ENCODE measurements at regions of chr12 and their contacts with region 1.

Region 1: DNA sequence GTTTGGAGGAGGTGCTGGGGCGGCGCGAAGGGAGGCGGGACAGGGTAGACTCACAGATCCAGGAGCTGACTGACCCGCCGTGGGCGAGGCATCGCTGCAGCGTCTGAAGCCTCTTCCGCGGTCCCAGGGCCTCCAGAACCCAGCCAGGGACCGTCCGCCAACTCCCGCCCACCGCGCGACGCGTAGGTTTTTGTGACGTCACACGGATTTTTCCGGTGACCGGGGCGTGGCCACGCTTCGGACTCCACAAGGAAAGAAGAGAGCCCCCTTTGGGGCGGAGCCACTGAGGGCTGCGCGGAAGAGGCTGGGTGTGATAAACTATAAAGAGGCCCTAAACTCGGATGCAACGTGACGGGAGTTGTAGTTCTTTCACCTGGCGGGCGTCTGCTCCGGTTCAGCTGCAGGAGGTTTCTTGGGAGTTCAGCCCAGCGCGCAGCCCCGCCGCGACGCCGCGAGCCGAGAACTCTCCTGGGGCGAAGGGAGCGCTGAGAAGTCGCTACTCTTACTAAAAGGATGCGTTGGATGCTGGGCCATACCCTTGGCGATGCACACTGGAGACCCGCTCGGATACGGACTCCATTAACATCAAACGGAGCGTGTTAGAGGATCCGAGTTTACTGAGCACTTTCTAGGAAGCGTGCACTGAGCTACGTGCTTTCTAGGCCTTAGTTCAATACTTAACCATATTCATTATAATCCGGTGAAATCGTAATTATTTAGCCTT is at the start of gene AMN1:
- DNase-seq: peak; percentile 98 to 100 (median 99)
- H3K4me3 ChIP-seq: peak within 1 kb of the TSS; percentile 88 to 99
- H3K4me3 Mint-ChIP-seq: peak within 1 kb of the TSS; percentile 98 to 100 (median 99)
- H3K27ac ChIP-seq: peak within 1 kb of the TSS; percentile 81
- H3K27ac Mint-ChIP-seq: peak within 1 kb of the TSS; percentile 97 to 100 (median 99)
- H3K4me1 ChIP-seq: peaks cover 54% of the 10 kb centered on the region
- H3K4me1 Mint-ChIP-seq: peaks cover 39 to 76% (median 55%) of the 10 kb centered on the region in 4 donors
- H3K27me3 ChIP-seq: no peaks in the 10 kb centered on the region
- H3K27me3 Mint-ChIP-seq: no peaks in the 10 kb centered on the region
- total RNA-seq, gene AMN1: 15.3 to 18.4 TPM

Region 2: DNA sequence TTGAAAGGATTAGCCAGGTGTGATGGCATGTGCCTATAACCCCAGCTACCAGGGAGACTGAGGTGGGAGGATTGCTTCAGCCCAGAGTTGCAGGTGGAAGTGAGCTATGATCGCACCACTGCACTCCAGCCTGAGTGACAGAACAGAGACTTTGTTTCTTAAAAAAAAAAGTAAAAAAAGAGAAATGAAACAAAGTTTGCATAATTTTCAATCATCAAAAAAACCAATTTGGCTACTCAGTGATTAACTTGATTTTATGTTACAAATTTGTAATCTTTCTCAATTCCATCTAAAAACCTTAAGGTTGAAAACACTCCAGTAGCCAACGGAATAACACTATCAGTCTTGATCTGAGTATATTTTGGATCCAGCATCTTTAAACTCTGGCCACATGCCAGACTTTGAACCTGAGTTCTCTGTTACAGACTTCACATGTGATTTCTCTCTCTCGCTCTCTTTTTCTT is 125.5 kb before region 1 on chr12:
- CTCF ChIA-PET with region 1: no interaction called
- POLR2A ChIA-PET with region 1: no interaction called
- intact Hi-C with region 1: no loop called
- DNase-seq: no peak
- H3K4me3 ChIP-seq: no peak overlapping the region
- H3K4me3 Mint-ChIP-seq: no peak overlapping the region
- H3K27ac ChIP-seq: no peak overlapping the region
- H3K27ac Mint-ChIP-seq: no peak overlapping the region
- H3K4me1 ChIP-seq: no peaks in the 10 kb centered on the region
- H3K4me1 Mint-ChIP-seq: no peaks in the 10 kb centered on the region
- H3K27me3 ChIP-seq: no peaks in the 10 kb centered on the region
- H3K27me3 Mint-ChIP-seq: peaks cover 0 to 9% of the 10 kb centered on the region in 2 donors

Region 3: GRCh38 chr12:31659087-31659933 is 69.8 kb before region 1 on chr12 and contains the start of gene ETFBKMT:
- CTCF ChIA-PET with region 1: no interaction called
- POLR2A ChIA-PET with region 1: interaction called, 18 read pairs
- intact Hi-C with region 1: loop called (anchors 1 kb)
- DNase-seq: peak; percentile 91 to 97 (median 94)
- H3K4me3 ChIP-seq: peak within 1 kb of the TSS; percentile 86 to 89
- H3K4me3 Mint-ChIP-seq: peak within 1 kb of the TSS; percentile 92 to 99 (median 94)
- H3K27ac ChIP-seq: peak within 1 kb of the TSS; percentile 86
- H3K27ac Mint-ChIP-seq: peak within 1 kb of the TSS; percentile 91 to 99 (median 98)
- H3K4me1 ChIP-seq: peaks cover 17% of the 10 kb centered on the region
- H3K4me1 Mint-ChIP-seq: peaks cover 8 to 21% (median 14%) of the 10 kb centered on the region in 4 donors
- H3K27me3 ChIP-seq: no peaks in the 10 kb centered on the region
- H3K27me3 Mint-ChIP-seq: no peaks in the 10 kb centered on the region
- total RNA-seq, gene ETFBKMT: 1.5 to 1.8 TPM

Region 4: DNA sequence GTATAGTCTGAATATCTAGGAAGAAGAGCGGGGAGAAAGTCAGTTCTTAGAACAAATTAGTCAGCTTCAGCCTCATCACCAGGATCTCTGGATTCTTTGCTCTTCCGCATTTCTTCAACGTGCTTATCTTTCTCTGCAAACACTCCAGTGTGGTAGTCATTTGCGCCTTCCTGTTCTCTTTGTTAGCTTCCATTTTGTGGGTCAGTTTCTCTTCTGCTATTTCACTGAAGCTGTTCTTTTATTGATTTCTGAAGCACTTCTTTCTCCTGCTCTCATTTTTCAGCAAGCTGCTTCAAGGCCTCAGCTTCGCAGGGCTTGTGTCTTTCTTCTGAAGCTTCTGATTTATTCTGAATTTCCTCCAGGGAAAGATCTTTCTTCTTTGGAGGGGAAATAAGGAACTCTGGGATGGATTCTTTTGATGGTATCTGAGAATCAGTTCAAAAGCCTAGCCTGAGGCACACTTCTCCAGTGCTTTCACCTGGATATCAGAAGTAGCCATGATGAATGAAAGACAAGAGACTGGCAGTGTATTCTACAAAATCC is 13.7 kb before region 1 on chr12:
- CTCF ChIA-PET with region 1: interaction called, 4 read pairs
- POLR2A ChIA-PET with region 1: interaction called, 17 read pairs
- intact Hi-C with region 1: no loop called
- DNase-seq: no peak
- H3K4me3 ChIP-seq: no peak overlapping the region
- H3K4me3 Mint-ChIP-seq: no peak overlapping the region
- H3K27ac ChIP-seq: no peak overlapping the region
- H3K27ac Mint-ChIP-seq: peak overlapping the region in 2 of 7 donors; percentile 22 to 57
- H3K4me1 ChIP-seq: no peaks in the 10 kb centered on the region
- H3K4me1 Mint-ChIP-seq: peaks cover 0 to 17% (median 8%) of the 10 kb centered on the region in 4 donors
- H3K27me3 ChIP-seq: no peaks in the 10 kb centered on the region
- H3K27me3 Mint-ChIP-seq: no peaks in the 10 kb centered on the region

Region 5: GRCh38 chr12:31749024-31749704 is 20.1 kb after region 1 on chr12:
- CTCF ChIA-PET with region 1: interaction called, 3 read pairs
- POLR2A ChIA-PET with region 1: interaction called, 15 read pairs
- intact Hi-C with region 1: loop called (anchors 1 kb)
- DNase-seq: peak in 4 of 5 donors; percentile 18 to 81 (median 33)
- H3K4me3 ChIP-seq: no peak overlapping the region
- H3K4me3 Mint-ChIP-seq: peak overlapping the region; percentile 39 to 81 (median 76)
- H3K27ac ChIP-seq: no peak overlapping the region
- H3K27ac Mint-ChIP-seq: peak overlapping the region in 6 of 7 donors; percentile 4 to 90 (median 85)
- H3K4me1 ChIP-seq: peaks cover 33% of the 10 kb centered on the region
- H3K4me1 Mint-ChIP-seq: peaks cover 32 to 60% (median 48%) of the 10 kb centered on the region in 4 donors
- H3K27me3 ChIP-seq: no peaks in the 10 kb centered on the region
- H3K27me3 Mint-ChIP-seq: no peaks in the 10 kb centered on the region

Region 6: DNA sequence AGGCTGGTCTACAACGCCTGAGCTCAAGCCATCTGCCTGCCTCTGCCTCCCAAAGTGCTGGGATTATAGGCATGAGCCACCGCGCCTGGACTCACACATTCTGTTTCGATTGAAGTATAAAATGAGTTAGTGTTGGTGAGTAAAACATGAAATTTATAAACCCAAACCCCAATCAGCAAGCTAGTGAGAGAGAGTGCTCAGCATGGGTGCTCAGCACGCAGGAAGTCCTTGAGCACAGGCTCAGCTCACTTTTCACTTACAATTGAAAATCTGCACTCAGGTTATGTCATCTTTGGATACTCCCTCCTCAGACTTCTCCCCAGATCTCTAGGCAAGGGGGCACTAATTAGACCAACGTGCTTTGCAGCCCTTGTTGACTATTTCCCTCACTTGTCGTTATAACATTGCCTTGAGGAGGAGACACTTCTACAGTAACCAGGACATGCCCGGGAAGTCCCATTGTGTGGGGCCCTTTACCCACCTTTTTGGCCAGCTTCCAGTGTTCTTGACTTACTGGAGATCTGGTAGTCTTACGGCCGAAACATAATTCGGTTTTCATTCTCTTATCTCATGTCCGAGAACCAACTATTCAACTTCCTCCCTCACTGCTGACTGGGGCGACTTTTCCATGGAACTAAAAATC is 68.3 kb after region 1 on chr12:
- CTCF ChIA-PET with region 1: no interaction called
- POLR2A ChIA-PET with region 1: interaction called, 4 read pairs
- intact Hi-C with region 1: loop called (anchors 5 kb)
- DNase-seq: no peak
- H3K4me3 ChIP-seq: no peak overlapping the region
- H3K4me3 Mint-ChIP-seq: peak overlapping the region; percentile 15 to 83 (median 58)
- H3K27ac ChIP-seq: no peak overlapping the region
- H3K27ac Mint-ChIP-seq: peak overlapping the region; percentile 63 to 89 (median 65)
- H3K4me1 ChIP-seq: peaks cover 18% of the 10 kb centered on the region
- H3K4me1 Mint-ChIP-seq: peaks cover 28 to 43% (median 32%) of the 10 kb centered on the region in 4 donors
- H3K27me3 ChIP-seq: no peaks in the 10 kb centered on the region
- H3K27me3 Mint-ChIP-seq: no peaks in the 10 kb centered on the region

Region 7: DNA sequence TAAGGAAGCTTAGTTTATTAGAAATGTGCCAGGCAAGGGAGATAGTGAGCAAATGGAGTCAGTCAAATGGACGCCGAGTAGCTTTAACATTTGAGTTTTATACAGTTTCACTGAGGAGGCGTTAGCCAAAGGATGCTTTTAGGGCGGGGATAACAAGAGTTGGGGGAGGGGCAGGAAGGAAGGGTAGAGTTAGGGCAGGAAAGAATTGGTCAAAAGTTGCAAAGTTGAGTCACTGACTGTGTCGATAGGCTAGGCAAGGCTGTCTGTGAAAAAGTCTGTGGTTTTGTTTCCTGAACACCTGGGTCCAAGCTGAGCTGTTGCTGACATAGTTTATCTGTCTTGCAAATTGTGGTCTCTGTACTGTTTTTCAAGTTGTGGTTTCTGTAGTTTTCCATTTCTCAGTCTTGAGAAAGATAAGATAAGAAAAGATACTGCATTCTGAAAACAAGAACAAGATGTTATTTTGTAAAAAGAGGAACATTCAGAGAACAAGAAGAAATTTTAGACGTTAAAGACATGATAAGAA is 167.5 kb after region 1 on chr12:
- CTCF ChIA-PET with region 1: interaction called, 11 read pairs
- POLR2A ChIA-PET with region 1: interaction called, 57 read pairs
- intact Hi-C with region 1: loop called (anchors 1 kb)
- DNase-seq: peak; percentile 88 to 95 (median 94)
- H3K4me3 ChIP-seq: peak overlapping the region; percentile 9 to 22
- H3K4me3 Mint-ChIP-seq: peak overlapping the region; percentile 63 to 88 (median 74)
- H3K27ac ChIP-seq: peak overlapping the region; percentile 55
- H3K27ac Mint-ChIP-seq: peak overlapping the region; percentile 91 to 99 (median 97)
- H3K4me1 ChIP-seq: peaks cover 75% of the 10 kb centered on the region
- H3K4me1 Mint-ChIP-seq: peaks cover 34 to 78% (median 49%) of the 10 kb centered on the region in 4 donors
- H3K27me3 ChIP-seq: no peaks in the 10 kb centered on the region
- H3K27me3 Mint-ChIP-seq: no peaks in the 10 kb centered on the region

Region 8: GRCh38 chr12:31966558-31967205 is 237.6 kb after region 1 on chr12:
- CTCF ChIA-PET with region 1: no interaction called
- POLR2A ChIA-PET with region 1: interaction called, 97 read pairs
- intact Hi-C with region 1: no loop called
- DNase-seq: no peak
- H3K4me3 ChIP-seq: peak overlapping the region; percentile 34 to 39
- H3K4me3 Mint-ChIP-seq: peak overlapping the region; percentile 93 to 98 (median 96)
- H3K27ac ChIP-seq: peak overlapping the region; percentile 35
- H3K27ac Mint-ChIP-seq: peak overlapping the region; percentile 85 to 95 (median 94)
- H3K4me1 ChIP-seq: peaks cover 94% of the 10 kb centered on the region
- H3K4me1 Mint-ChIP-seq: peaks cover 60 to 95% (median 73%) of the 10 kb centered on the region in 4 donors
- H3K27me3 ChIP-seq: no peaks in the 10 kb centered on the region
- H3K27me3 Mint-ChIP-seq: no peaks in the 10 kb centered on the region